ENCODE measurements at regions of chr5 and their contacts with region 1.

Region 1: GRCh38 chr5:128213340-128213739 is 129.8 kb downstream of the SLC12A2 start:
- DNase-seq: no peak
- H3K4me3 ChIP-seq: no peak overlapping the region
- H3K27ac ChIP-seq: no peak overlapping the region
- H3K4me1 ChIP-seq: peaks cover 0 to 15% (median 12%) of the 10 kb centered on the region in 4 donors
- H3K27me3 ChIP-seq: no peaks in the 10 kb centered on the region
- CTCF ChIP-seq: peak; percentile 52 to 59

Region 2: GRCh38 chr5:128455841-128456401 is 242.6 kb after region 1 on chr5:
- intact Hi-C with region 1: loop called (anchors 5 kb)
- DNase-seq: no peak
- H3K4me3 ChIP-seq: no peak overlapping the region
- H3K27ac ChIP-seq: no peak overlapping the region
- H3K4me1 ChIP-seq: no peaks in the 10 kb centered on the region
- H3K27me3 ChIP-seq: no peaks in the 10 kb centered on the region
- CTCF ChIP-seq: no peak

Region 3: GRCh38 chr5:128844354-128844923 is 631.1 kb after region 1 on chr5:
- intact Hi-C with region 1: loop called (anchors 10 kb)
- DNase-seq: no peak
- H3K4me3 ChIP-seq: no peak overlapping the region
- H3K27ac ChIP-seq: no peak overlapping the region
- H3K4me1 ChIP-seq: no peaks in the 10 kb centered on the region
- H3K27me3 ChIP-seq: no peaks in the 10 kb centered on the region
- CTCF ChIP-seq: peak; percentile 26 to 38

Region 4: DNA sequence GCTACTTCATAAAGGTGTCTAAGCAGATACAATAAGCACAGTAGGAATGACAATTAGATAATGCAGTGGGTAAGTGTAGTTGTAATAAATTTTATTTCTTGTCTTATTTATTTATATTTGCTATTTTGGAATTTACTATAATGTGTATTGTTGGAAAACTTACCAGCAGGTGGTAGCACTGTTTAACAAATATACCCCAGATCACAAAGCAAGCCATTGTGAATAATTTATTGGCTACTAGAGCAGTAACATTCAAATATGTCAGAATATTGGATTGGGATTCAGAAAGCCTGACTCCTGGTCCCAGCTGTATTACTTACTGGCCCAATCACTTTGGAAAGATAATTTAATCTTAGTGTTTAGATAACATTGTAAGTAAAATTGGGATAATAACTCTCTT is 959.2 kb after region 1 on chr5:
- intact Hi-C with region 1: no loop called
- DNase-seq: no peak
- H3K4me3 ChIP-seq: no peak overlapping the region
- H3K27ac ChIP-seq: no peak overlapping the region
- H3K4me1 ChIP-seq: no peaks in the 10 kb centered on the region
- H3K27me3 ChIP-seq: no peaks in the 10 kb centered on the region
- CTCF ChIP-seq: no peak